Dendritic cell treated with granulocyte-macrophage colony-stimulating factor and Interleukin-4, amounts not matched to agents 40 ng/mL and 50 ng/mL, for 4 days (primary cell): ENCODE measurements at regions of chr12 and their contacts with region 1.

Region 1: GRCh38 chr12:64890873-64891468 is 66.5 kb downstream of the TBC1D30 start:
- H3K4me3 Mint-ChIP-seq: no peak overlapping the region
- H3K27ac Mint-ChIP-seq: no peak overlapping the region
- H3K4me1 Mint-ChIP-seq: no peaks in the 10 kb centered on the region
- H3K27me3 Mint-ChIP-seq: peaks cover 15% of the 10 kb centered on the region

Region 2: GRCh38 chr12:64856426-64856825 is 34.5 kb before region 1 on chr12:
- intact Hi-C with region 1: no loop called
- H3K4me3 Mint-ChIP-seq: no peak overlapping the region
- H3K27ac Mint-ChIP-seq: no peak overlapping the region
- H3K4me1 Mint-ChIP-seq: no peaks in the 10 kb centered on the region
- H3K27me3 Mint-ChIP-seq: peaks cover 2% of the 10 kb centered on the region

Region 3: DNA sequence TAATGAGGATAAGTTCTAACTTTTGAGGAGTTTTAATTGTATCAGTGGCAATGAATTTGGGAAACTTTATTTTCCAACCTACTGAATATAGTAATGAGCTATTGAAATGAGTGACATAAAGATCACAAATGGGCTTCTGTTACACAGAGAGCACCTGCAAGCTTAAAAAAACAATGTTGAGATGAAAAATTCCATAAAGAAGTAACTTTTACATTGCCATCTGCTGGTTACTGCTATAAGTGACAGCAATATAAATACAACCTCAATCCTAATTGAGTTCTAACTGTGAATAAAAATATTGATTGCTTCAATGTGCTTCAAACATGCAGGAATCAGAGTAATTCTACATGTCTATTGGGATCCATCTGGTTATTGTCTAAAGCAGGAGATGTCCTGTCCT is 216.0 kb after region 1 on chr12:
- intact Hi-C with region 1: loop called (anchors 5 kb)
- H3K4me3 Mint-ChIP-seq: no peak overlapping the region
- H3K27ac Mint-ChIP-seq: no peak overlapping the region
- H3K4me1 Mint-ChIP-seq: no peaks in the 10 kb centered on the region
- H3K27me3 Mint-ChIP-seq: peaks cover 7% of the 10 kb centered on the region

Region 4: GRCh38 chr12:65121049-65121955 is 230.3 kb after region 1 on chr12 and contains the start of gene WIF1:
- intact Hi-C with region 1: loop called (anchors 5 kb)
- H3K4me3 Mint-ChIP-seq: peak within 1 kb of the TSS; percentile 14
- H3K27ac Mint-ChIP-seq: no peak within 1 kb of the TSS
- H3K4me1 Mint-ChIP-seq: peaks cover 13% of the 10 kb centered on the region
- H3K27me3 Mint-ChIP-seq: peaks cover 41% of the 10 kb centered on the region

Region 5: GRCh38 chr12:65232476-65233077 is 341.6 kb after region 1 on chr12:
- intact Hi-C with region 1: loop called (anchors 1 kb)
- H3K4me3 Mint-ChIP-seq: no peak overlapping the region
- H3K27ac Mint-ChIP-seq: no peak overlapping the region
- H3K4me1 Mint-ChIP-seq: no peaks in the 10 kb centered on the region
- H3K27me3 Mint-ChIP-seq: no peaks in the 10 kb centered on the region

Region 6: DNA sequence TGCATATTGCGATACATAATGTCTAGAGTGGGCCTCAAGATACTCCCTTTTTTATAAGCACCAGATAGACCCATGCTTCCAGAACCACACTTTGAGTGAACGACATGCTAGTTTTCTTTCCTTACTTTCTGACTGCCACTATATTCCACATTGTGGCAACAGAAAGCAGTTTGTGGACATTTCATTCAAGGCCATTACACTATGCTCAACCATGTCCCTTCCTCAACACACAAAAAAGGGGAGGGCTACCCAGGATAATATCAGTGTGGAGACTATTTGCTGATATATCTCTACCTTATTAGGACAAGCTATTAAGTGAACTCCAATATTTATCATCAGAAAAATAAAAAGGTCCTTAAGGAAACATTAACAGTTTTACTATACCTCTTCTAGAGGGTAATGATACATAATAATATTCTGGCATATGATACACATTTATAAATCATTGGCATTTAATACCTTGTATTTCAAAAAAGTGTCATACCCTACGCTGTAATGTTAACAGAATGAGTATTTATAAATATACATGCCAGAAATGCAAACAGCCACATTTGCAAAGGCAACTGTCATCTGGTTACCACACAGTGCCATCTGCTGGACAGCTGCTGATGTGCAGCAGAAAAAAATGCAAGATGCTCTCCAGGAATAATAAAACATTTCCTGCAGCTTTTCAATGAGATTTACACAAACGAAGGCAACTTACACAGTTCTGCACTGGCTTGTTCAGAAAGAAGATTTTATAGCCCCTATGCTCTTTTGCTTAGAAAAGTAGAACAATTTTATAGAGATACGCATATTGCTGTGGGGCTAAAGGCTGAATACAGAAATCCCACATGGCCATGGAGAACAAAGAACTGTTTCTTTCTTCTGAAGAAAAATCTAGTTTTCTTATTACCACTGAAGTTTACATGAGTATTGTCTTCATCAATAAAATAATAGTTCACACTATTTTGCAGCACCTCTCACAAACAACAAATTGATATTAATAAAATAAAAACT is 1970.1 kb after region 1 on chr12:
- intact Hi-C with region 1: loop called (anchors 5 kb)
- H3K4me3 Mint-ChIP-seq: no peak overlapping the region
- H3K27ac Mint-ChIP-seq: no peak overlapping the region
- H3K4me1 Mint-ChIP-seq: no peaks in the 10 kb centered on the region
- H3K27me3 Mint-ChIP-seq: no peaks in the 10 kb centered on the region